GM12878 (cell line): ENCODE measurements at regions of chr13 and their contacts with region 1.

Region 1: GRCh38 chr13:89695343-89696257 is 1651.9 kb upstream of the MIR17HG start:
- DNase-seq: no peak
- ATAC-seq: peak; percentile 79
- H3K4me3 ChIP-seq: no peak overlapping the region
- H3K27ac ChIP-seq: no peak overlapping the region
- H3K4me1 ChIP-seq: no peaks in the 10 kb centered on the region
- H3K27me3 ChIP-seq: no peaks in the 10 kb centered on the region
- CTCF ChIP-seq: peak; percentile 36 to 55 (median 54); a peak in 5 of 6 replicates
- EP300 ChIP-seq: no peak
- POLR2A ChIP-seq: no peak
- RAD21 ChIP-seq: peak; percentile 59

Region 2: DNA sequence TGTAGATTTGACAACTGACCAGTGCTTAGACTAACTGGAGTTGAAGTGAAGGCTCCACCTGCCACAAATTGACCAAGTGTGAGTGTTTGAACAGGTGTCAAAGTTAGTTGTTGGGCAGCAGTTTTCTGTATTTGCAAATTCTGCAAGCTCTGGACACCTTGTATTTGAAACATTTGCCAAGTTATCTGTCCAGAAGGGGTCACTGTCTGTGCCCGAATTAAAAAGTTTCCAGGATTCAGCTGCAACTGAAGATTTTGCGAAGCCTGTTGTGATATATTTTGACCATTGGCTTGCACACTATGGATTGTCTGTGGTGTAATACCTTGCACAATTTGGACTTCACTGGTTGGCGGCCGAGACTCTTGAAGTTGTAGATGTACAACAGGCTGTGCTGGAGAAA is 333.7 kb before region 1 on chr13:
- CTCF ChIA-PET with region 1: no interaction called
- POLR2A ChIA-PET with region 1: no interaction called
- RAD21 ChIA-PET with region 1: no interaction called
- SMC1A ChIA-PET with region 1: no interaction called
- in situ Hi-C with region 1: no loop called
- intact Hi-C with region 1: loop called (anchors 10 kb)
- DNase-seq: no peak
- ATAC-seq: no peak
- H3K4me3 ChIP-seq: no peak overlapping the region
- H3K27ac ChIP-seq: no peak overlapping the region
- H3K4me1 ChIP-seq: no peaks in the 10 kb centered on the region
- H3K27me3 ChIP-seq: no peaks in the 10 kb centered on the region
- CTCF ChIP-seq: no peak; a peak in 1 of 6 replicates
- EP300 ChIP-seq: no peak
- POLR2A ChIP-seq: no peak
- RAD21 ChIP-seq: no peak

Region 3: DNA sequence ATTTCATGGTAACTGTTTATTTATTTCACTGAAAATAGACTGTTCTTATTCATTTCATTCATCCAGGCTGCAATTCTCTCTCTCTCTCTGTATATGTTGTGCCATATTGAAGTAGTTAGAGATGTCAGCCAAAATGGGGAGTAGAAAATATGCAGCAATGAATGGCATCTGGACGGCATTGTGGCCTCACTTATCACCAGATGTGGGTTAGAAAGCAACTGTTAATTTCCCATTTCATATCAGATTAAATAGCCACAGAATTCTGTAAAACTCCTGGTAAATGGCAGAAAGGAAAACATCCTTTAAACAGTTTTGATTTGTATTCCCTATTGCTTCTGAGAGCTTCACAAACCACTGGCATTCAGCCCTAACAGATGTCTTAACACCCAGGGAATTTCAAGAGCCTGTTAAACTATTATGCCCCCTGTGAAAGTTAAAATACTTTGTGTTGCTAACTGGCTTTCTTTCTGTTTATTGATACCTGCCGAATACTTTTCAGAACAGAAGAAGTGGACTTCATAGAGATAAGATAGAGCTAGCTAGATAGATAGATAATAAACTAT is 111.5 kb before region 1 on chr13:
- CTCF ChIA-PET with region 1: no interaction called
- POLR2A ChIA-PET with region 1: no interaction called
- RAD21 ChIA-PET with region 1: no interaction called
- SMC1A ChIA-PET with region 1: no interaction called
- in situ Hi-C with region 1: no loop called
- intact Hi-C with region 1: no loop called
- DNase-seq: no peak
- ATAC-seq: no peak
- H3K4me3 ChIP-seq: no peak overlapping the region
- H3K27ac ChIP-seq: no peak overlapping the region
- H3K4me1 ChIP-seq: no peaks in the 10 kb centered on the region
- H3K27me3 ChIP-seq: no peaks in the 10 kb centered on the region
- CTCF ChIP-seq: no peak
- EP300 ChIP-seq: no peak
- POLR2A ChIP-seq: no peak
- RAD21 ChIP-seq: no peak

Region 4: GRCh38 chr13:89660752-89661151 is 34.8 kb before region 1 on chr13:
- CTCF ChIA-PET with region 1: no interaction called
- POLR2A ChIA-PET with region 1: no interaction called
- RAD21 ChIA-PET with region 1: no interaction called
- SMC1A ChIA-PET with region 1: no interaction called
- in situ Hi-C with region 1: no loop called
- intact Hi-C with region 1: no loop called
- DNase-seq: no peak
- ATAC-seq: no peak
- H3K4me3 ChIP-seq: no peak overlapping the region
- H3K27ac ChIP-seq: no peak overlapping the region
- H3K4me1 ChIP-seq: no peaks in the 10 kb centered on the region
- H3K27me3 ChIP-seq: no peaks in the 10 kb centered on the region
- CTCF ChIP-seq: no peak
- EP300 ChIP-seq: no peak
- POLR2A ChIP-seq: no peak
- RAD21 ChIP-seq: no peak

Region 5: GRCh38 chr13:89708013-89708412 is 12.4 kb after region 1 on chr13:
- CTCF ChIA-PET with region 1: interaction called, 7 read pairs
- POLR2A ChIA-PET with region 1: no interaction called
- RAD21 ChIA-PET with region 1: interaction called, 7 read pairs
- SMC1A ChIA-PET with region 1: interaction called, 10 read pairs
- in situ Hi-C with region 1: no loop called
- intact Hi-C with region 1: no loop called
- DNase-seq: no peak
- ATAC-seq: no peak
- H3K4me3 ChIP-seq: no peak overlapping the region
- H3K27ac ChIP-seq: no peak overlapping the region
- H3K4me1 ChIP-seq: no peaks in the 10 kb centered on the region
- H3K27me3 ChIP-seq: no peaks in the 10 kb centered on the region
- CTCF ChIP-seq: no peak
- EP300 ChIP-seq: no peak
- POLR2A ChIP-seq: no peak
- RAD21 ChIP-seq: no peak